ENCODE measurements at regions of chr1 and their contacts with region 1.

Region 1: DNA sequence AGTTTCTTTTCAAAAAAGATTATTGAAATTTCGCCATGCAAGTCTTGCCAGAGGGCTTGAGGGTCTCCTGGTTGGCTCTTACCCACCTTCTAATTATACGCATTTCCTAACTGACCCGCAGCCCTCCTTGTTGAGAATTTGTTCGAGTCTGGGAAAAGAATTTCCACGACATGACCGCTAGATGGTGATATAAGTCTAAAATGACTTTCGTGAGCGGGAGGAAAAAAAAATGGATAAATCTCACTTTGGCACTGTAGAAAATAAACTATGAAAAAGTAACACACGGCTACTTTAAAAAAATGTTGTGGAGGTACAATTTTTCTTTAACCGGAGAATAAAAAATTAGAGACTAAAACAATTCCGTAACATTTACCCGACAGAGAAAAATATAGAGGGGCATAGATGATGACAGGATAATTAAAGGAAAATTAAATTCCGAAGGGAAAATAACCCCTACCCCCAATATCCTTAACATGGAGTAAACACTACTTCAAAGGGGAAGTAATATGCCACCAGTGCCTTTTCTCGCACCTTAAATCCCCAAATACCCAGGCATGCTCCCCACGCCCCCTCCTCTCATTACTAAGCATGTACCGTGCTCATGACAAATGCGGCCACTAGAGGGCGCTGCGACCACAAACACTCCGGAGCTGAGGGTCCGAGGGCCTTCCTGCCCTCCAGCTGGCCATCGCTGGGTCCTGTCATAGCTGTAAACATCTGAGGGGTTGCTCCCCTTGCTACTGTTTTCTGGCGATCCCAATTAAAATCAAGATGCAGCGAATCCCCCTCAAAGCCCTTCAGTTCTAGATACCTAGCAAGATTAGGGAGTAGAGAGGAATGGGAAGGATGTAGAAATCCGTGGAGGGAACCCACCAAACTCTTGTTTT is 266.9 kb downstream of the ASTN1 start:
- DNase-seq: peak; percentile 79
- H3K4me3 ChIP-seq: peak overlapping the region; percentile 73
- H3K27ac ChIP-seq: no peak overlapping the region
- H3K4me1 ChIP-seq: peaks cover 5% of the 10 kb centered on the region; the same call in 1 of the 2 replicates
- H3K27me3 ChIP-seq: peaks cover 37% of the 10 kb centered on the region

Region 2: GRCh38 chr1:176648556-176648955 is 249.0 kb before region 1 on chr1:
- in situ Hi-C with region 1: no loop called
- DNase-seq: peak; percentile 8
- H3K4me3 ChIP-seq: no peak overlapping the region
- H3K27ac ChIP-seq: no peak overlapping the region
- H3K4me1 ChIP-seq: peaks cover 2% of the 10 kb centered on the region; the same call in 1 of the 2 replicates
- H3K27me3 ChIP-seq: no peaks in the 10 kb centered on the region

Region 3: GRCh38 chr1:177119311-177119710 is 221.7 kb after region 1 on chr1:
- in situ Hi-C with region 1: no loop called
- DNase-seq: no peak
- H3K4me3 ChIP-seq: no peak overlapping the region
- H3K27ac ChIP-seq: no peak overlapping the region
- H3K4me1 ChIP-seq: no peaks in the 10 kb centered on the region
- H3K27me3 ChIP-seq: peaks cover 6% of the 10 kb centered on the region; the same call in 1 of the 2 replicates

Region 4: DNA sequence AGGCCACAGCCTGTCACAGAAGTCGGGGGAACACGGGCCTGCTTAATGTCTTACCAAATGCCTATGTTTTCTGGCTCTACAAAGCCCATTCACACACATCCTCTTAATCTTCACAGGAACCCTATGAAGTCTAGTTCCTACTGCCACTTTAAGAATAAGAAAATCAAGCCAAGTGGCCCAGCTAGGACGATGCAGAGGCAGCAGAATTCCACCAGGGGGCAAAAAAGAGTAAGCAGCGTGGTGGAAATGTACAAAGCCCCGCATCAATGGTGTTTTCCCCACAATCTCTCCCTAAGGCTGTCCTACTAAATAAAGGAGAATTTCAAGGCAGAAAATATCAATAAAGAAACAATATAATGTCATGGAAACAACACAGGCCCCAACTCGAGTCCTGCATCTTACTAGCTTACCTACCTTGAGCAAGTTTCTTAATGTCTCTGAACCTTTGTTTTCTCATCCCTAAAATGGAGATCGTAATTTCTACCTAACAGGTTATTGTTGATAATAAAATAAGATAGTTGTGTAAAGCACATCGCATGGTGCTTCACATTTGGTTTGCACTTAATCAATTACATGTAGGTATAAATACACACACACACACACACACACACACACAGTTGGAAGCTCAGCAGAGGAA is 1050.9 kb after region 1 on chr1:
- in situ Hi-C with region 1: loop called (anchors 10 kb)
- DNase-seq: peak; percentile 82
- H3K4me3 ChIP-seq: no peak overlapping the region
- H3K27ac ChIP-seq: no peak overlapping the region
- H3K4me1 ChIP-seq: peaks cover 3% of the 10 kb centered on the region
- H3K27me3 ChIP-seq: no peaks in the 10 kb centered on the region

Measured in GM23248 (cell line).